ENCODE measurements at regions of chr12 and their contacts with region 1.

Region 1: DNA sequence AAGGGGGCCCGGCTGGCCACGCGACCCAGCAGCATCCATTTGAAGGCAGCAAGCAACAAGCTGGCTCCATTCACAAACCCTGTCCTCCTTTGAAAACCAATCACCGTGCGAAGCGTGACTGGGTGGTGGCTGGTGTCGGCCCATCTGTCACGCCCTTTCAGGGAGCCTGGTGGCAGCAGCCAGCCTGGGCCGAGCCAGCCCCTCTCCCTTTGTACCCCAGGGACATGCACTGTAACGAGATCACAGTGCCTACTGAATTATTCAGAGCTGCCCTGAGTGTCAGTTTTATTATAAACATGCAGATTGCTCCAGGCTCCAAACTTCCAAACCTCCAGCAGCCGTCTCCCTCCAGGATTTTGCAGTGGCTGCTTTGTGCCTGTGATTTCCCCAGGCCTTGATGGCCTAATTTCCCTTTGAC is 22.3 kb upstream of the CTDSP2 start:
- DNase-seq: peak in 9 of 10 donors; percentile 61 to 85 (median 80)
- H3K4me3 ChIP-seq: peak overlapping the region in 44 of 59 donors; percentile 3 to 53 (median 24)
- H3K27ac ChIP-seq: peak overlapping the region; percentile 9 to 92 (median 83)
- H3K27me3 ChIP-seq: no peaks in the 10 kb centered on the region
- CTCF ChIP-seq: peak in 5 of 56 donors; percentile 6 to 31 (median 14)

Region 2: DNA sequence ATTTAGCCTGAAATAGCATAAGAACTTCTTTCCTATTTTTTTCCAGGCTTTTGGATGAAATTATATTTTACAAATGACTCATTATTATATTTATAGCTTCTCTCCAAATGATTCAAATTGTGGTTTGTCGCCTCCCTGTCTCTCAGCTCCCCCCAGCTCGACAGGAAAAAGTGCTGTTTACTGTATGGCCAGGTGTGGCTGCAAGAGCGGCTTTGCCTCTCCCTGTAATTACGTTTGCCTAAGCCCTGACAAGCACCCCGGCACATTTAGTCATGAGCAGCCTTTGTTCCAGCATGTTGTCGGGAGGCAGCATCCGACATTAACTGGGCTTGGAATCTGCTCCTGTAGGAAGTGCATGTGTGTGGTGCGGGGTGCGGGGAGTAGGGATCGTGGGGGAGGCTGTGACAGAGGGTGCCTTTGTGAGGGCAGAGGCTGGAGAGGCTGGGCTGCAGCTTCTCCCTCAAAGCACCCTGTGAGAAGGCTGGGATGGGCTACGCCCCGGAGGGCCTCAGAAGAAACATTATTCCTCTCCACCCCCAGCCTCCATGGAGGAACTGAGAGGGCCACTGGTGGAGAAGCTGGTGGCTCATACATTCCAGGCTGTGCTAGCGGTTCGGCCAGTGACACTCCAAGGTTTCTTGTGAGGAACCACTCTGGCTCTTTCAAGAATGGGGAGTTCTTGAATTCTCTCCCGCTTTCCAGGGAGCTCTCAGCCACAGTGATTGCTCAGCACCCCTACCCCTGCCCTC is 19.7 kb after region 1 on chr12:
- intact Hi-C with region 1: loop called in 1 of 2 experiments (anchors 1 kb)
- DNase-seq: peak; percentile 52 to 82 (median 76)
- H3K4me3 ChIP-seq: peak overlapping the region in 50 of 59 donors; percentile 1 to 57 (median 29)
- H3K27ac ChIP-seq: peak overlapping the region; percentile 27 to 100 (median 96)
- H3K27me3 ChIP-seq: no peaks in the 10 kb centered on the region
- CTCF ChIP-seq: peak in 4 of 56 donors; percentile 9 to 14 (median 10)